Panc1 (cell line): ENCODE measurements at regions of chr5 and their contacts with region 1.

Region 1: DNA sequence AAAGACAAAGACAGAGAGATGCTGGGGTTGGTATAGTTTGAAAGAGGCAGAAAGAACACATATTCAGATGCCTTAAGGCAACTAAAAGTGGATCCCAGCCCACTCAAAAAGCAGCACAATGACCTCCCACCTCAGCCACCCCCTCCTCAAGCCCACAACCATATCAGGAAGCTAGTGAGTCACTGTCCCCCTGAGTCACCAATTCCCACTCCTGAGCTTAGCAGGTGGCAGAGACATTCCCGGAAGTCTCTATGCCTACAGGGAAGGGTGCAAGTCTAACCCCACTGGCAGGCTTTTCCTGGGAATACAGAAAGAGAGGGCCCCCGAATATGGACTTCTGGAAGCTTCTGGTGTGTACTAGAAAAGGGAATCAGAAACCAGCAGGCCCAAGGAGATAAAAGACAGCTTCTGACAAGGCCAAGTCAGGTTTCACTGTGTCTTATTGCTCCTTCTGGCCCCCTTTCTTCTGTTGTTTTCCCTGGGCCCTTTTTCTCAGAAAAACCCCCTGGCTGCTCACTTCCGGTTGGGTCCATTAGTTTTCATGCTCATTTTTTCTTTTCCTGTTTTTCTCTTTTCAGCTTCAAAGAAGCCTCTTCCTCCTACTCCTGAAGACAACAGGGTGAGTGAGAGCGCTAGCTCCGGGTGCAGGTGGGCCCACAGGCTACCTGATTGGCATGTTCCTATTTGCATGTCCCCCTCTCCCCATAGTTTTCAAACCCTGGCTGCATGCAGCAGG is 36.8 kb downstream of the ITK start:
- DNase-seq: no peak
- ATAC-seq: no peak
- H3K4me3 ChIP-seq: no peak overlapping the region
- H3K27ac ChIP-seq: no peak overlapping the region
- H3K4me1 ChIP-seq: no peaks in the 10 kb centered on the region
- H3K27me3 ChIP-seq: no peaks in the 10 kb centered on the region
- CTCF ChIP-seq: no peak

Region 2: DNA sequence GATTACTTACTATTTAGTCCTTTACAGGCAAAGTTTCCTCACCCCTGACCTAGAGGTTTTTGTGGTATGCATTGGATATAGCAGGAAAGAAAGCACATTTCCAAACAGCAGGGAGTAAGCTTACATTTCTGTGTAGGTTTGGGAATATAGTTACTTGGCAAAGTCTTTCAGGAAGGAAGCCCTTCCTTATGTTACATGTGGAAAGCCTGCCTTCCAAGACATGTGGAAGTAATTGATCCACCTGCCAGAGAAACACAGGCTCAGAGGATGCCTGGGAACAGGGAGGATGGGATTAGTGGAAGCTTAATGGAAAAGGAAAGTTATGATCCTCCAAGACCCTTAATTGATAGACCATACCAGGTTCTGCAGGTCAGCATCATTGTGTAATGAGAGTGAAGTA is 454.7 kb before region 1 on chr5:
- CTCF ChIA-PET with region 1: interaction called, 10 read pairs
- POLR2A ChIA-PET with region 1: no interaction called
- in situ Hi-C with region 1: no loop called
- intact Hi-C with region 1: no loop called
- DNase-seq: no peak
- ATAC-seq: no peak
- H3K4me3 ChIP-seq: no peak overlapping the region
- H3K27ac ChIP-seq: no peak overlapping the region
- H3K4me1 ChIP-seq: no peaks in the 10 kb centered on the region
- H3K27me3 ChIP-seq: no peaks in the 10 kb centered on the region
- CTCF ChIP-seq: no peak

Region 3: GRCh38 chr5:157198277-157198986 is 19.0 kb before region 1 on chr5:
- CTCF ChIA-PET with region 1: no interaction called
- POLR2A ChIA-PET with region 1: no interaction called
- in situ Hi-C with region 1: no loop called
- intact Hi-C with region 1: no loop called
- DNase-seq: no peak
- ATAC-seq: no peak
- H3K4me3 ChIP-seq: no peak overlapping the region
- H3K27ac ChIP-seq: no peak overlapping the region
- H3K4me1 ChIP-seq: no peaks in the 10 kb centered on the region
- H3K27me3 ChIP-seq: peaks cover 4% of the 10 kb centered on the region
- CTCF ChIP-seq: no peak